Naive thymus-derived CD4-positive, alpha-beta T cell (primary cell): ENCODE measurements at regions of chr10 and their contacts with region 1.

Region 1: DNA sequence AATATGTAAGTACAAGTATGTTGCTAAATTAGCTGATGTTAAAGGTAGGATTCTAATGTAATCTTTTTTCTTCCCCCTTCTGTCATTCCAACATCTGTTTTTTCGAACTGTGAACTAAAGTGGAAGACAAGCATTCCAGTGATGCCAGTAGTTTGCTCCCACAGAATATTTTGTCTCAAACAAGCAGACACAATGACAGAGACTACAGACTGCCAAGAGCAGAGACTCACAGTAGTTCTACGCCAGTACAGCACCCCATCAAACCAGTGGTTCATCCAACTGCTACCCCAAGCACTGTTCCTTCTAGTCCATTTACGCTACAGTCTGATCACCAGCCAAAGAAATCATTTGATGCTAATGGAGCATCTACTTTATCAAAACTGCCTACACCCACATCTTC is 62.7 kb downstream of the WAC start:
- DNase-seq: no peak
- ATAC-seq: no peak
- H3K4me3 ChIP-seq: no peak overlapping the region
- H3K4me3 Mint-ChIP-seq: peak overlapping the region in 2 of 10 donors; percentile 20 to 40
- H3K27ac ChIP-seq: no peak overlapping the region
- H3K27ac Mint-ChIP-seq: peak overlapping the region in 3 of 9 donors; percentile 16 to 23 (median 22)
- H3K4me1 ChIP-seq: peaks cover 6 to 16% of the 10 kb centered on the region in 2 donors
- H3K4me1 Mint-ChIP-seq: peaks cover 46 to 91% (median 84%) of the 10 kb centered on the region in 7 donors
- H3K27me3 ChIP-seq: no peaks in the 10 kb centered on the region
- H3K27me3 Mint-ChIP-seq: no peaks in the 10 kb centered on the region

Region 2: DNA sequence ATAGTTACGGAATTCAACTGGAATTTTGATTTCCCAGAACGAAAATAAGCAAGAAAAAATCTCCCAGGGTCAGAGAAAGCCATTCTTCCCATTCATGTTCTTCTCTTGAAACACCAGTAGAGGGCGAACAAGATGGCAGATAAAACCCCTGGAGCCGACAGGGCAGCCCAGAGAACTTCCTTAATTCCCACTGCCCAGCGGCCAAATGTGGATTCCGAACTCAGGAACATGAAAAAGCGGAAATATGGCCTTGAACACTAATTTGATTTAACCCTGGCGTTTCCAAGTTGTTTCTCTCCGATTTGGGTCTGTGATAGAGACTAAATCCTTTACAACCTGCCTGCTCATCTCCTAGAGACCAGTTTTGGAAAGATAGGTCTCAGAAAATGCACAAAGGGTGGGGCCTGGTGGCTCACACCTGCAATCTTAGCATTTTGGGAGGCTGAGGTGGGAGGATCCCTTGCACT is 163.4 kb before region 1 on chr10:
- CTCF ChIA-PET with region 1: no interaction called
- POLR2A ChIA-PET with region 1: no interaction called
- intact Hi-C with region 1: loop called in 1 of 2 experiments (anchors 5 kb)
- DNase-seq: peak in 7 of 9 donors; percentile 11 to 45 (median 35)
- ATAC-seq: peak; percentile 83
- H3K4me3 ChIP-seq: no peak overlapping the region
- H3K4me3 Mint-ChIP-seq: peak overlapping the region in 9 of 10 donors; percentile 17 to 80 (median 57)
- H3K27ac ChIP-seq: no peak overlapping the region
- H3K27ac Mint-ChIP-seq: no peak overlapping the region
- H3K4me1 ChIP-seq: no peaks in the 10 kb centered on the region
- H3K4me1 Mint-ChIP-seq: peaks cover 4 to 9% (median 7%) of the 10 kb centered on the region in 7 donors
- H3K27me3 ChIP-seq: no peaks in the 10 kb centered on the region
- H3K27me3 Mint-ChIP-seq: peaks cover 0 to 7% (median 0%) of the 10 kb centered on the region in 5 donors

Region 3: GRCh38 chr10:28661062-28661461 is 65.4 kb after region 1 on chr10:
- CTCF ChIA-PET with region 1: no interaction called
- POLR2A ChIA-PET with region 1: no interaction called
- intact Hi-C with region 1: no loop called
- DNase-seq: no peak
- ATAC-seq: no peak
- H3K4me3 ChIP-seq: no peak overlapping the region
- H3K4me3 Mint-ChIP-seq: no peak overlapping the region
- H3K27ac ChIP-seq: no peak overlapping the region
- H3K27ac Mint-ChIP-seq: peak overlapping the region in 1 of 9 donors; percentile 57
- H3K4me1 ChIP-seq: no peaks in the 10 kb centered on the region
- H3K4me1 Mint-ChIP-seq: peaks cover 0 to 3% (median 0%) of the 10 kb centered on the region in 7 donors
- H3K27me3 ChIP-seq: no peaks in the 10 kb centered on the region
- H3K27me3 Mint-ChIP-seq: peaks cover 18 to 26% (median 24%) of the 10 kb centered on the region in 5 donors

Region 4: GRCh38 chr10:29266641-29267040 is 671.0 kb after region 1 on chr10:
- CTCF ChIA-PET with region 1: no interaction called
- POLR2A ChIA-PET with region 1: no interaction called
- intact Hi-C with region 1: no loop called
- DNase-seq: no peak
- ATAC-seq: no peak
- H3K4me3 ChIP-seq: no peak overlapping the region
- H3K4me3 Mint-ChIP-seq: no peak overlapping the region
- H3K27ac ChIP-seq: no peak overlapping the region
- H3K27ac Mint-ChIP-seq: no peak overlapping the region
- H3K4me1 ChIP-seq: no peaks in the 10 kb centered on the region
- H3K4me1 Mint-ChIP-seq: no peaks in the 10 kb centered on the region
- H3K27me3 ChIP-seq: no peaks in the 10 kb centered on the region
- H3K27me3 Mint-ChIP-seq: peaks cover 0 to 26% (median 13%) of the 10 kb centered on the region in 5 donors